ENCODE measurements at regions of chr1 and their contacts with region 1.

Region 1: DNA sequence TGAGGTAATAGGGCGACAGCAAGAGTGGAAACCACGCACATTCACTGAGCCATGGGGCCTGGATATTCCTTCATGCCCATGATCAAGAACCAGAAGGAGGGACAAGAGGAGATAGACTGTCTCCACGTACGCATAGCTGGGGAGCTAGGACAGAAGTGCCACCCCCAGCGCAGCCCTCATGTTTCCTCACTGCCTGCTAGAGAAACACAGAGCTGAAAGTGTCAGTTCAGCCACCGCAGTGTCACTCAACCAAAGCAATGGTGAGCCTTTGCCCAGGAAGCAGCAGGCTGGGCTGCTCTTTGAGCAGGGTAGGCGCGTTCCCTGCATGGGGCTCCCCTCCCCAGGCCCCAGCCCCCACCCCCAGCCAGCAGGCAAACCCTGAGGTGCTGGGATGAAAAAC is 68.5 kb downstream of the STUM start:
- DNase-seq: no peak
- H3K4me3 ChIP-seq: no peak overlapping the region
- H3K27ac ChIP-seq: no peak overlapping the region
- H3K4me1 ChIP-seq: no peaks in the 10 kb centered on the region
- H3K27me3 ChIP-seq: no peaks in the 10 kb centered on the region; the same call in 1 of the 2 replicates
- CTCF ChIP-seq: no peak

Region 2: DNA sequence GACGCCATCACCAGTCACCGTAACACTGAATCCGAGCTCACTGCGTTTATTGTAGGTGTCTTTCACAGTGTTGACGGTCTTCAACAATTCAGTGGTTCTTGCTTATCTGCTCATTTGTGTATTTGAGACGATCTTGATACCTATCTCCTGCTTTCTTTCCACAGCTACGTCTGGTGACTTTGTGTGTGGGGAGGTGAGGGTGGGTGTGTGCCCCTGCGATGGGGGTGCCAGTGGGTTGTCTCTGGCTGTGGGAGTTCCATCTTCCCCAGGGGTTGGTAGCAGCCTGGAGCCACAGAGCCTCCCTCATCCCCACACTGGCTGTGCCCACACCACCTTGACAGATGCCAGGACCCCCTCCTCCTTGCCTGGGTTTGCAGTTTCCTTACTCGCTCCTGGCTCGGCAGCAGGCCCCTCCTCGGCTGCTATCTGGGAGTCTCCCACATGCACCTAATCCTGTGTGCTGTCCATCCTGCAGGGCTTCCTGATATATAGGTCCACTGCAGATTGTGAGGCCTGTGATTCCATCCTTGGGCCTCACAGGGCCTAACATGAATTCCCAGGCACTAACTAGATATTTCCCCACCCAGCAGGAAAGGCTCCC is 202.9 kb before region 1 on chr1:
- CTCF ChIA-PET with region 1: no interaction called
- POLR2A ChIA-PET with region 1: no interaction called
- intact Hi-C with region 1: no loop called
- DNase-seq: no peak
- H3K4me3 ChIP-seq: no peak overlapping the region
- H3K27ac ChIP-seq: no peak overlapping the region
- H3K4me1 ChIP-seq: no peaks in the 10 kb centered on the region
- H3K27me3 ChIP-seq: no peaks in the 10 kb centered on the region
- CTCF ChIP-seq: no peak

Region 3: GRCh38 chr1:227140376-227140775 is 523.3 kb after region 1 on chr1:
- CTCF ChIA-PET with region 1: no interaction called
- POLR2A ChIA-PET with region 1: interaction called, 23 read pairs
- intact Hi-C with region 1: no loop called
- DNase-seq: no peak
- H3K4me3 ChIP-seq: no peak overlapping the region
- H3K27ac ChIP-seq: no peak overlapping the region
- H3K4me1 ChIP-seq: no peaks in the 10 kb centered on the region
- H3K27me3 ChIP-seq: no peaks in the 10 kb centered on the region
- CTCF ChIP-seq: no peak

Measured in PC-9 (cell line).